ENCODE measurements at regions of chr7 and their contacts with region 1.

Region 1: DNA sequence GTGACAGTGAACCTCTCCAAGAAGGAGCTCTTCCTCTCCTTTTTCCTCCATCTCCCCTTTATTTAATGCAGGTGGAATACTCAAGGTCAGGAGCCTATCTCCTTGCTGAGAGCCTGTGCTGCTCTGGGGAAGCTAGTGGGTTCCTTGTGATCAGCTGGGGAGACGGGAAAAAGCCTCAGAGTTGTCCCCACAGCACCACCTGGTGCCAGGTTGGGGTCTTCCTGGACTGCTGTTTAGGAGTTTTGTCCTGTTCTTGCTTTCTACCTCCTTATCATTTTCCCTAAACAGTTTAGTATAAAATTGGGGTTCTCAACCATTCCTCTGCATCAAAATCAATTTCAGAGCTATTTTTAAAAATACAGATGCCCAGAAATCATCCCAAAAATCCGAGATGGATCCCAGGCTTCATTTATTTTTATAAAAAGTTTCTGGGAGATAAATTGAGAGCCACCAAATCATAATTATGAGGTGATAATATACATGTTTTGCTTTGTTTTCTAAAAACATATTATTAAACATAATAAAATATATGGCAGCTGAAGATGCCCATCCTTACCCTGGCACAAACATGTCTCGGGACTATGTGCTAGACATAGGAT is 44.3 kb downstream of the MACC1 start:
- DNase-seq: peak; percentile 54
- H3K4me3 ChIP-seq: no peak overlapping the region
- H3K27ac ChIP-seq: no peak overlapping the region
- H3K4me1 ChIP-seq: no peaks in the 10 kb centered on the region
- CTCF ChIP-seq: peak; percentile 84

Region 2: GRCh38 chr7:19754521-19755116 is 418.2 kb before region 1 on chr7:
- CTCF ChIA-PET with region 1: no interaction called
- POLR2A ChIA-PET with region 1: no interaction called
- intact Hi-C with region 1: loop called (anchors 2 kb)
- DNase-seq: peak; percentile 29
- H3K4me3 ChIP-seq: no peak overlapping the region
- H3K27ac ChIP-seq: no peak overlapping the region
- H3K4me1 ChIP-seq: peaks cover under 1% of the 10 kb centered on the region
- CTCF ChIP-seq: peak; percentile 94

Region 3: DNA sequence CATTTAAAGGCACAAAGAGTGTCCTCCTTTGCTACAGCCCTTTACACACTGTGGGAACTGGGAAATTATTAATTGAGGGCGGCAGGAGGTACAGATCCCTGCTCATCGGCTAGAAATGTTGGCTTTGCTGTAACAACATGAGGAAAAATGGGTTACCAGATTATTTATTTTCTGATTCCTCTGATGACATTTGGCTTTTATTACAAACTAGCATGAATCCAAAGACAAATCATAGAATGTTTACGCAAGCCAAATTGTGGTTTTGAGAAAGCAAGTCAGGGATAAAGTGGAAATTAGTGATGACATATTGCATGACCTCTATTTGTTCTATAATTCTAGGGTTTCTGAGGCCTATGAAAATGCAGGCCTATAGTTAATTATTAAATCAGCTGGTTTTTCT is 273.3 kb before region 1 on chr7:
- CTCF ChIA-PET with region 1: no interaction called
- POLR2A ChIA-PET with region 1: no interaction called
- intact Hi-C with region 1: no loop called
- DNase-seq: no peak
- H3K4me3 ChIP-seq: no peak overlapping the region
- H3K27ac ChIP-seq: no peak overlapping the region
- H3K4me1 ChIP-seq: no peaks in the 10 kb centered on the region
- CTCF ChIP-seq: no peak

Region 4: DNA sequence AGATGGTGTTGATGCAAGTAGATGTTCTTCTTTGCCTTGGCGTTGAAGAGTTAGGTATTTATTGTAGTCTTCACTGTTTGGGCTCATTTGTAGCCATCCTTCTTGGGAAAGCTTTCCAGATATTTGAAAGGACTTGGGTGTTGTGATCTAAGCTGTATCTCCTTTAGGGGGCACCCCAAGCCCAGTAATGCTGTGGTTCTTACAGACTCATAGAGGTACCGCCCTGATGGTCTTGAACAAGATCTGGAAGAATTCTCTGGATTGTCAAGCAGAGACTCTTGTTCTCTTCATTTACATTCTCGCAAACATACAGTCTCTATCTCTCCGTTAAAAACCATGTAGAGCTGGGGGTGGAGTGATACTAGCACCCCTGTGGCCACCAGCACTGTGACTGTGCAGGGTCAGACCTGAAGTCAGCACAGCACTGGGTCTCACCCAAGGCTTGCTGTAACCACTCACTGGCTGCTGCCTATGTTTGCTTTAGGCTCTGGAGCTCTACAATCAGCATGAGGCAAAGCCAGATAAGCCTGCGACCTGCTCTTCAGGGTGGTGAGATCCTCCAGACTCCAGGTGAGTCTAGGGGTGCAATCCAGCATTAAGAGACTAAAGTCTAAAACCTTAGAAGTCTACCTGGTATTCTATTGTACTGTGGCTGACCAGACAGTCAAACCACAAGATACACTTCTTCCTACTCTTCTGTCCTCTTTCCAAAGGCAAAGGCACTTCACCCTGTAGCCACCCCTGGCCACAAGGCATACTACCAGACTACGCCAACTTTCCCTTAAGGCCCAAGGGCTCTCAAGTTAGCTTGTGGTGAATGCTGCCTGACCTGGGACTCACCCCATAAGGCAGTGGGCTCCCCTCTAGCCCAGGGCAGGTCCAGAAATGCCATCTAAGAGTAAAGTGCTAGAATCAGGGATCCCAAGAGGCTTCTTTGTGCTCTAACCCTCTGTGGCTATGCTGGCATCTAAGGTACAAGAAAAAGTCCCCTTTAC is 189.7 kb before region 1 on chr7:
- CTCF ChIA-PET with region 1: no interaction called
- POLR2A ChIA-PET with region 1: no interaction called
- intact Hi-C with region 1: loop called (anchors 5 kb)
- DNase-seq: peak; percentile 41
- H3K4me3 ChIP-seq: no peak overlapping the region
- H3K27ac ChIP-seq: no peak overlapping the region
- H3K4me1 ChIP-seq: no peaks in the 10 kb centered on the region
- CTCF ChIP-seq: peak; percentile 75

Region 5: GRCh38 chr7:20013536-20013935 is 159.3 kb before region 1 on chr7:
- CTCF ChIA-PET with region 1: no interaction called
- POLR2A ChIA-PET with region 1: no interaction called
- intact Hi-C with region 1: no loop called
- DNase-seq: no peak
- H3K4me3 ChIP-seq: no peak overlapping the region
- H3K27ac ChIP-seq: no peak overlapping the region
- H3K4me1 ChIP-seq: no peaks in the 10 kb centered on the region
- CTCF ChIP-seq: no peak

Region 6: DNA sequence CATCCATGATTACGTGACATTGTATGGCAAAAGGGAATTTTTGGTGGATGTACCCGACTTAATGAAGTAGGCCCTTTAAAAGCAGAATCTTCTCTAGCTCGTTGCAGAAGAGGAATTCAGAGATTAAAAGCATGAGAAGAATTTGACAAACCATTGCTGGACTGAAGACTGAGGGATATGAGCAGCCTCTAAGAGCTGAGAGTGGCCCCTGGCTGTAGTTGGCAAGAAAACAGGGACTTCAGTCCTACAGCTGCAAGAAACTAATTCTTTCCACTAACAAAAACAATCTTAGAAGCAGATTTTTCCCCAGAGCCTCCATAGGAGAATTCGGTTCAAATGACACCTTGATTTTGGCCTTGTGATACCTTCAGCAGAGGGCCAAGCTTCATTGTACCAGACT is 10.3 kb after region 1 on chr7:
- CTCF ChIA-PET with region 1: no interaction called
- POLR2A ChIA-PET with region 1: no interaction called
- intact Hi-C with region 1: no loop called
- DNase-seq: no peak
- H3K4me3 ChIP-seq: no peak overlapping the region
- H3K27ac ChIP-seq: no peak overlapping the region
- H3K4me1 ChIP-seq: no peaks in the 10 kb centered on the region
- CTCF ChIP-seq: no peak